ENCODE measurements at regions of chr6 and their contacts with region 1.

Region 1: GRCh38 chr6:47242483-47243386 is 67.0 kb downstream of the TNFRSF21 start:
- DNase-seq: peak; percentile 96
- H3K4me3 ChIP-seq: peak overlapping the region in 1 of 4 donors; percentile 2
- H3K27ac ChIP-seq: peak overlapping the region; percentile 52 to 80 (median 76)
- H3K4me1 ChIP-seq: peaks cover 0 to 76% (median 49%) of the 10 kb centered on the region in 4 donors
- H3K27me3 ChIP-seq: no peaks in the 10 kb centered on the region
- CTCF ChIP-seq: no peak
- EP300 ChIP-seq: peak; percentile 52 to 96 (median 91)
- POLR2A ChIP-seq: no peak

Region 2: GRCh38 chr6:46746696-46747095 is 496.0 kb before region 1 on chr6 and contains the start of gene ANKRD66:
- intact Hi-C with region 1: no loop called
- DNase-seq: no peak
- H3K4me3 ChIP-seq: no peak within 1 kb of the TSS
- H3K27ac ChIP-seq: no peak within 1 kb of the TSS
- H3K4me1 ChIP-seq: no peaks in the 10 kb centered on the region
- H3K27me3 ChIP-seq: no peaks in the 10 kb centered on the region
- CTCF ChIP-seq: no peak
- EP300 ChIP-seq: no peak
- POLR2A ChIP-seq: no peak
- total RNA-seq, gene ANKRD66: not detected

Region 3: GRCh38 chr6:46876126-46876525 is 366.6 kb before region 1 on chr6:
- intact Hi-C with region 1: no loop called
- DNase-seq: no peak
- H3K4me3 ChIP-seq: no peak overlapping the region
- H3K27ac ChIP-seq: no peak overlapping the region
- H3K4me1 ChIP-seq: no peaks in the 10 kb centered on the region
- H3K27me3 ChIP-seq: no peaks in the 10 kb centered on the region
- CTCF ChIP-seq: no peak
- EP300 ChIP-seq: no peak
- POLR2A ChIP-seq: no peak

Region 4: GRCh38 chr6:47083586-47084047 is 159.1 kb before region 1 on chr6:
- intact Hi-C with region 1: loop called (anchors 5 kb)
- DNase-seq: peak; percentile 98
- H3K4me3 ChIP-seq: peak overlapping the region in 1 of 4 donors; percentile 12
- H3K27ac ChIP-seq: peak overlapping the region; percentile 41 to 79 (median 73)
- H3K4me1 ChIP-seq: peaks cover 0 to 37% (median 22%) of the 10 kb centered on the region in 4 donors
- H3K27me3 ChIP-seq: no peaks in the 10 kb centered on the region
- CTCF ChIP-seq: no peak
- EP300 ChIP-seq: peak; percentile 75 to 96 (median 86)
- POLR2A ChIP-seq: no peak

Region 5: DNA sequence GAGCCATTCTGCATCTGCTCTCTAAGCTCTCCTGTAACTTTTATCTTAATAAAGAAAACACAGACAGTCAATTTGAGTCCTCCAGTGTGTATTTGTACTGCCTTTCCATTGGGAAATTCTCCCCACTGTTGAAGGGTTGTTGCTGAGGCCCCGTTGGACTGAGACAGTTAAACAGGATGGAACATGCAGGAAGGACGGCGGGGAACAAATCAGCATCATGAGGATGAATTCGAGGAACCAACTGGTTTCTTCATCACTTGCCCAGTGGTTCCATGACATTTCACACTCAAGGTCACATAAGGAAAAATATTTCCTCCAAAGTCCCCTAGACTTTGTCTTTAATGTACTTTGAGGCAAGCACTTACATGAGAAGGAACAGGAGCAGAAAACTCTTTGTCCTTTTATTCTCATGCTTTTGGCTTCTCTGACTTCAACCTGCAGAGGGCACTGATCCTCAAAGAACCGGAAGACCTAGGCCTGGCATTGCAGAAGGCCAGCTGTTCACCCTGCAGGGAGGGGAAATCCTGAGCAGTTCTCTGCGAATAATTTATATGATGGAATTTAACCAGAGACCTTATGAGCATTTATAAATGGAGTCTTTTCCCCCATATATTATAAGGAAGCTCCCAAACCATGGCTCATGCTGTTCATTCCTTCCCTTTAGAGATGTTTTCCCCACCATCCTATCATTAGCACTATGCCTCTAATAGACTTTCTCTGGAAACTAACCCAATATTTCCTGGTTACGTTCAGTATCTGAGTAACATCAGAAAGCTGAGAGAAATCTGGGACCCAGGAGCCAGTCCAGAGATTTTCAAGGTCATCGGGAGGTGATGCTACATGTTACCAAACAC is 145.4 kb before region 1 on chr6:
- intact Hi-C with region 1: loop called (anchors 5 kb)
- DNase-seq: peak; percentile 82
- H3K4me3 ChIP-seq: no peak overlapping the region
- H3K27ac ChIP-seq: peak overlapping the region in 3 of 4 donors; percentile 21 to 32 (median 25)
- H3K4me1 ChIP-seq: peaks cover 0 to 29% (median 4%) of the 10 kb centered on the region in 4 donors
- H3K27me3 ChIP-seq: no peaks in the 10 kb centered on the region
- CTCF ChIP-seq: peak; percentile 46 to 71 (median 66)
- EP300 ChIP-seq: no peak
- POLR2A ChIP-seq: no peak

Region 6: GRCh38 chr6:47195011-47195650 is 47.6 kb before region 1 on chr6:
- intact Hi-C with region 1: no loop called
- DNase-seq: peak; percentile 81
- H3K4me3 ChIP-seq: no peak overlapping the region
- H3K27ac ChIP-seq: peak overlapping the region in 3 of 4 donors; percentile 55 to 76 (median 68)
- H3K4me1 ChIP-seq: peaks cover 0 to 31% (median 22%) of the 10 kb centered on the region in 4 donors
- H3K27me3 ChIP-seq: no peaks in the 10 kb centered on the region
- CTCF ChIP-seq: no peak
- EP300 ChIP-seq: peak in 1 of 4 donors; percentile 17
- POLR2A ChIP-seq: no peak

Region 7: DNA sequence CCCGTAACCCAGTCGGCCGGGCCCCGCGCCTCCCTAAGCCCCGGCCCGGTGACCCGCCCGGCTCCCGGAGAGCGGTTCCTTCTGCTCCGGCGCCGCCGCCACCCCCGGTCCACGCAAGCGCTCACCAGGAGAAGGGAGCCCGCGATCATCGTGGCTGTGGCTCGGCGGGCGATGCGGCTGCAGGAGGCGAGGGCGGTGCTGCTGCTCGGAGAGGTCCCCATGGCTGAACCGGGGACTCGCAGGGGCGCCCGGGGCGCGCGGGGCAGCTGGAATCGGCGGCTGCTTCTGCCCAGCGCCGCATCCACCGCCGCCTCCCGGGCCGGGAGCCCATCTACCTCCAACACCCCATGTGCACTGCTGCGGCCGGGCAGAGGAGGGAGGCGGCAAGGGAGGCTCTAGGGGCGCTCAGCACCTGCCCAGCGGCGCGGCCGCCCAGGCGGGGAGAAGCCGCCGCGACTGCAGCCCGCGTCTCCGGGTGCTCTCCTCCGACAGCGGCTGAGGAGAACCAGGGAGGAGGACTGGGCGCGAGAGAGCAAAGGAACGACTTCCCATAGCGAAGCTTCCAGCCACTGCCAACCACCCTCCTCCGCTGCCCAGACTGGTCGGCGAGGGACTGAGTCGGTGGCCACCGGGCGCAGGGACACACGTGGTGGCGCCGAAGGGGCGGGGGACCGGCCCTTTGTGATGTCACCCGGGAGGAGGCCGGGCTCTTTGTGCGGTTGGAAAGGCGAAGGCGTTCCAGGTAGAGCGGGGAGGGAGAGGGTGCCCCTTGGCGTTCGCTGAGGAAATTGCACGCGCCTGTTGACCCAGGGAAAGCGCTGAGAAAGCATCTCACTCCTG is 66.8 kb after region 1 on chr6 and contains the start of gene TNFRSF21:
- intact Hi-C with region 1: loop called (anchors 2 kb)
- DNase-seq: peak; percentile 96
- H3K4me3 ChIP-seq: peak within 1 kb of the TSS; percentile 49 to 93 (median 69)
- H3K27ac ChIP-seq: peak within 1 kb of the TSS; percentile 78 to 93 (median 86)
- H3K4me1 ChIP-seq: peaks cover 0 to 43% (median 22%) of the 10 kb centered on the region in 4 donors
- H3K27me3 ChIP-seq: no peaks in the 10 kb centered on the region
- CTCF ChIP-seq: peak; percentile 86 to 97 (median 93)
- EP300 ChIP-seq: no peak
- POLR2A ChIP-seq: peak; percentile 48 to 91
- total RNA-seq, gene TNFRSF21: 15.8 to 25.3 (median 20.6) TPM

Region 8: GRCh38 chr6:48101277-48101676 is 858.5 kb after region 1 on chr6:
- intact Hi-C with region 1: no loop called
- DNase-seq: no peak
- H3K4me3 ChIP-seq: no peak overlapping the region
- H3K27ac ChIP-seq: no peak overlapping the region
- H3K4me1 ChIP-seq: no peaks in the 10 kb centered on the region
- H3K27me3 ChIP-seq: no peaks in the 10 kb centered on the region
- CTCF ChIP-seq: no peak
- EP300 ChIP-seq: no peak
- POLR2A ChIP-seq: no peak

Measured in sigmoid colon (tissue), 7 donors.